PC-3 (cell line): ENCODE measurements at regions of chr7 and their contacts with region 1.

Region 1: GRCh38 chr7:35613096-35613495 is 81.8 kb downstream of the HERPUD2 start:
- DNase-seq: no peak
- ATAC-seq: no peak
- H3K4me3 ChIP-seq: no peak overlapping the region
- H3K27ac ChIP-seq: no peak overlapping the region
- H3K4me1 ChIP-seq: no peaks in the 10 kb centered on the region
- H3K27me3 ChIP-seq: no peaks in the 10 kb centered on the region
- CTCF ChIP-seq: no peak

Region 2: DNA sequence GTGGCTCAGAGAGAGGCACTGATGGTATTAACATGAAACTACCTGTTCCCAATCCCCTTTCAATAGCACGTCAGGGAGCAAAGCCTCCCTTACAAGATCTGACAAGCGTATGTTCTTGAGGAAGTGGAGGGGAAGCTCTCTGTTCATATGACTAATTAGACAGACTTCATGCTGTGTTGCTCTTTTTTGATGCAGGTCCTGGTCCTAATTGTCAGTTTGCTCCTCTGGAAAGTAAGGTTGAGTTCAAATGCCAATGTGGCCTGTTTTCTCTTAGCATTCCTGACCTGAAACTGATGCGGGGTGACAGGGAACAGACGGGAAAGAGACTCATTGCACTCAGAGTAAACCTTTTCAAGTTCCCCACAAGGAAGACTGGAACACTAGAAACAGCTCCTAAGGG is 332.2 kb before region 1 on chr7:
- CTCF ChIA-PET with region 1: no interaction called
- POLR2A ChIA-PET with region 1: no interaction called
- intact Hi-C with region 1: no loop called
- DNase-seq: no peak
- ATAC-seq: no peak
- H3K4me3 ChIP-seq: no peak overlapping the region
- H3K27ac ChIP-seq: no peak overlapping the region
- H3K4me1 ChIP-seq: no peaks in the 10 kb centered on the region
- H3K27me3 ChIP-seq: peaks cover 20% of the 10 kb centered on the region
- CTCF ChIP-seq: no peak

Region 3: GRCh38 chr7:35482241-35482640 is 130.9 kb before region 1 on chr7:
- CTCF ChIA-PET with region 1: no interaction called
- POLR2A ChIA-PET with region 1: no interaction called
- intact Hi-C with region 1: no loop called
- DNase-seq: no peak
- ATAC-seq: no peak
- H3K4me3 ChIP-seq: no peak overlapping the region
- H3K27ac ChIP-seq: no peak overlapping the region
- H3K4me1 ChIP-seq: no peaks in the 10 kb centered on the region
- H3K27me3 ChIP-seq: peaks cover 48% of the 10 kb centered on the region
- CTCF ChIP-seq: no peak

Region 4: GRCh38 chr7:35537067-35538023 is 75.8 kb before region 1 on chr7:
- CTCF ChIA-PET with region 1: no interaction called
- POLR2A ChIA-PET with region 1: no interaction called
- intact Hi-C with region 1: no loop called
- DNase-seq: peak; percentile 80
- ATAC-seq: peak; percentile 98
- H3K4me3 ChIP-seq: peak overlapping the region; percentile 53; the same call in 1 of the 2 replicates
- H3K27ac ChIP-seq: no peak overlapping the region
- H3K4me1 ChIP-seq: peaks cover 8% of the 10 kb centered on the region; the same call in 1 of the 2 replicates
- H3K27me3 ChIP-seq: peaks cover 12% of the 10 kb centered on the region; the same call in 1 of the 2 replicates
- CTCF ChIP-seq: peak; percentile 85

Region 5: GRCh38 chr7:35593896-35594295 is 19.2 kb before region 1 on chr7:
- CTCF ChIA-PET with region 1: no interaction called
- POLR2A ChIA-PET with region 1: no interaction called
- intact Hi-C with region 1: no loop called
- DNase-seq: no peak
- ATAC-seq: no peak
- H3K4me3 ChIP-seq: no peak overlapping the region
- H3K27ac ChIP-seq: no peak overlapping the region
- H3K4me1 ChIP-seq: peaks cover 5% of the 10 kb centered on the region; the same call in 1 of the 2 replicates
- H3K27me3 ChIP-seq: no peaks in the 10 kb centered on the region
- CTCF ChIP-seq: peak; percentile 68

Region 6: DNA sequence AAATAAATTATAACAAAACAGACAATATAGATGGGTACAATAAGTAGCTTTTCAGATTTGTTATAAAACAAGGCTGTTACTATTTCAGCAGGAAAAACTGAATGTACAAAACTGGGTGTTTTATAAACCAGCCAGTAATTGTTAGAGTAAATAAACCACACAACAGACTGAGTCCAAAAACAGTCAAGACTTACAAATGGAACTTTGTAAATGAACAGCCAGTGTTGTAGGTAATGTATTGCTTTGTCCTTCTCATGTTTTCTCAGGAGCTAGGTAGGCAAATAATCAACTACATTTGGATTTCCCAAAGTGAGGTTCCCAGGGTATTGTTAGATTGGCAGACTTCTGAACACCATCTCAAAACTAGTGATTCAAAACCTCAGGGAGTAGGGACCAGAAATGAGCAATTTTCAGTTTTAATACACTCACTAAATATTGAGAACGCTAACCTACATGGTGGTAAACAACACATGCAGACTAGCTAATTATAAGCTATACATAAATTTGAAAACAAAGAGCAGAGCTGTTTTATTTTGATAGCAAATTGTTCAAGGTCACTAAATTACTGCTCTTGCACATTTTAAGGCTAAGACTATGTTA is 45.6 kb after region 1 on chr7:
- CTCF ChIA-PET with region 1: interaction called, 11 read pairs
- POLR2A ChIA-PET with region 1: no interaction called
- intact Hi-C with region 1: no loop called
- DNase-seq: no peak
- ATAC-seq: no peak
- H3K4me3 ChIP-seq: no peak overlapping the region
- H3K27ac ChIP-seq: no peak overlapping the region
- H3K4me1 ChIP-seq: no peaks in the 10 kb centered on the region
- H3K27me3 ChIP-seq: no peaks in the 10 kb centered on the region
- CTCF ChIP-seq: no peak